Stomach (tissue), 19 donors: ENCODE measurements at regions of chr1 and their contacts with region 1.

Region 1: GRCh38 chr1:181179987-181180365 is 91.5 kb downstream of the IER5 start:
- DNase-seq: peak in 1 of 2 donors; percentile 91
- H3K4me3 ChIP-seq: no peak overlapping the region
- H3K27ac ChIP-seq: no peak overlapping the region
- H3K4me1 ChIP-seq: peaks cover 0 to 21% (median 9%) of the 10 kb centered on the region in 4 donors
- H3K27me3 ChIP-seq: peaks cover 0 to 23% (median 0%) of the 10 kb centered on the region in 3 donors
- CTCF ChIP-seq: no peak
- EP300 ChIP-seq: no peak
- POLR2A ChIP-seq: no peak

Region 2: DNA sequence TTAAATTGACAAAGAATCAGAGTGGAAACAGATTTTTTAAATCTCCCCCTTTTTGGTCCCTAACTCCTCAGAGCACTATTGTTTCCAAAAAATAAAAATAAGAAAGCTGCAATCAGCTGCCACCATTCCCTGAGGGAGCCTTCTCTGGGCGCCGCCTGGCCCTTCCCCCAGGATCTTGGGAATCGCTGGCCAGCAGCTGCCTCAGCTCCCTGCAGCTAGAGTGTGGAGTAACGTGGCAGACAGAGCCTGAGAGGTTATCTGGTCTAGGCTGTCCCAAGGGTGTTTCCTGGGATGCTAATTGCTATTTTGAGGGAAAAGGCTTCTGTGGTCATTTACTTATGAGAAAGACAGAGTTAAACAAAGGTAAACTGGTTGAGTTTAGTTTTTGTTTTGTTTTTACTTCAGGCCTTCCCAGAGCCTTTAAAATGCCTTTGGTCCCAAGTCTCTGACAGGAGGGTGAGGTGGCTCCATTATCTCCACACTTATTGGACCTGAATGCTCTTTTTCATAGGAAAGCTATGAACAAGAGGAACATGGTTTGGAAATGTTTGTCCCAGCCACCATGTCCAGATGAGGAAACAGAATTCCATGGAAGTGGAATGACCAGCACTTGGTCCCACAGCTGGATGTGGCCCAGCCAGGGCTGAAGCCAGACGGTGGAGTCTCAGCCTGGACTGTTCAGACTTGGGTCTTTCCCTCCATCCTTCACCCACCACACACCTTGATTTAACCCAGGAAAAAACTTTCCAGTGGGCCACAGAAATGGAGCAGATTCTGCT is 281.3 kb before region 1 on chr1:
- intact Hi-C with region 1: loop called (anchors 10 kb)
- DNase-seq: peak in 1 of 2 donors; percentile 26
- H3K4me3 ChIP-seq: no peak overlapping the region
- H3K27ac ChIP-seq: no peak overlapping the region
- H3K4me1 ChIP-seq: peaks cover 0 to 11% (median 6%) of the 10 kb centered on the region in 4 donors
- H3K27me3 ChIP-seq: no peaks in the 10 kb centered on the region
- CTCF ChIP-seq: no peak
- EP300 ChIP-seq: no peak
- POLR2A ChIP-seq: no peak

Region 3: GRCh38 chr1:180988253-180988752 is 191.7 kb before region 1 on chr1:
- intact Hi-C with region 1: no loop called
- DNase-seq: no peak
- H3K4me3 ChIP-seq: no peak overlapping the region
- H3K27ac ChIP-seq: no peak overlapping the region
- H3K4me1 ChIP-seq: peaks cover 0 to 6% (median 3%) of the 10 kb centered on the region in 4 donors
- H3K27me3 ChIP-seq: no peaks in the 10 kb centered on the region
- CTCF ChIP-seq: no peak
- EP300 ChIP-seq: no peak
- POLR2A ChIP-seq: no peak